ENCODE measurements at regions of chr1 and their contacts with region 1.

Region 1: DNA sequence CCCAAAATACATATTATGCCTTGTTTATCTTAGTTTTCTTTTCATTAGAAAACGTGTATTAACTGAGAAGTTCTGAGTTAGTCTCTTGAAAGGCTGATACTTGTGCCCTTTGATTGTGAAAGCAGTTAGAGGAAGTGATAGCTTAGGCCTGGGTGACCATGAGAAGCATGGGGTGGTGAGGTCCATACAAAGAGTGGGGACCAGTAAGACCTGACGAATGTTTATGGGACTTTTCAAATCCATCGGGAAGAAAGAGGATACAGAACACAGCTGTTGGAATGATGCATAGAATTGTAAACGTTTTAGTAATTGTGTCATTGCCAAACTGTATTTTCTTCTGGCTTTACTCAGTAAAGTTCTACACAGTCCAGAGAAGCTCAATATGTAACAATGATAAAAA is 259.8 kb downstream of the LMO4 start:
- DNase-seq: no peak
- H3K4me3 ChIP-seq: no peak overlapping the region
- H3K27ac ChIP-seq: no peak overlapping the region
- H3K4me1 ChIP-seq: peaks cover 41% of the 10 kb centered on the region
- H3K27me3 ChIP-seq: no peaks in the 10 kb centered on the region
- CTCF ChIP-seq: no peak

Region 2: DNA sequence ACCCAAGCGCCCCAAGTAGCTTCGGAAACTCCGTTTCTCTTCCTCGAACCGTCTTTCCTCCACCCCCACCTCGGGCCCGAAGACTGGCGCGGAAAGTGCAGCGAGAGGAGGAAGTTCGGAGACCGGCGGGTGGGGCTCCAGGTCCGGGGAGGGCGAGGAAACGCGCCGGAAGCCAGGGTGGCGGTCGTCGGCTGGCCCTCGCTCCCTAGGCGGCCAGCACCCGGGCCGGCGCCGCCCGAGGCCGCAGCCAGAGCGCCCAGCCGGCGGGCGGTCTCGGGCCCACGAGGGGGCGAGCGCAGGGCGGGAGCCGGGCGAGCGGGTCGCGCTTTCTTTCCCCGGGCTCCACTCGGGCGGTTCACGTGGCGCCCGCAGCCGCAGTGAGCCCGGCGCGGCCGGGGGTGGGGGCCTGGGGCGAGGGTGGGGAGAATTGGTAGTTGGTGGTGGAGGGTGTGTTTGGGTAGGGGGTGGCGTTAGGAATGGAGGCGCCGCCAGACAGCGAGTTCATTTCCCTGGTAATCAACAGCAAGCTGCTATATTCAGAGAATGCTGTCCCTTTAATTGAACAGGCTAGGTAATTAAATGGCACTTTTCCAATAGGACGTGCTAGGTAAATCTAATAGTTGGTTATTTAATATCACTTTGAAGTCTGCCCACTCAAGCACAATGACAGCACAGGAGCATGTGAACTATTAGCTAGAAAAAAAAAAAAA is 253.2 kb before region 1 on chr1:
- CTCF ChIA-PET with region 1: no interaction called
- POLR2A ChIA-PET with region 1: no interaction called
- intact Hi-C with region 1: loop called (anchors 10 kb)
- DNase-seq: peak; percentile 61
- H3K4me3 ChIP-seq: peak overlapping the region; percentile 63
- H3K27ac ChIP-seq: peak overlapping the region; percentile 84
- H3K4me1 ChIP-seq: peaks cover 42% of the 10 kb centered on the region
- H3K27me3 ChIP-seq: no peaks in the 10 kb centered on the region
- CTCF ChIP-seq: no peak; the same call in 1 of the 2 replicates

Region 3: DNA sequence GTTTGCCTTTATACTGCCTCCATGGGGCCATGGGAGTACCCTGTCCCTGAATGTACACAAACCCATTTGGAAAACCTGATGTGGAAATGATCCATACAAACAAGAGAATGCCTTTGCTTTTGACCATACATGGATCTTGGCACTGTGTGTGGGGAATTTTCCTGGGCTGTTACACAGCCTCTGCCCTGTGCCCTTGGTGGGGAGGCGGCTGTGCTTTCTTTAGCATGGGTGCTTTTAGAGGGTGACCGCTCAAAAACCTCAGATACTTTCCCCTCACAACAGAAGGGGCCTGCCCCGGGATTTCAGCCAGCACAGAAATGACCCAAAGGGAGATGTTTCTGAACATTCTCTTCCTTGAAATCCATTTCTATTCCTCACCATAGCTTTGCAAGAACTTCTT is 65.0 kb before region 1 on chr1:
- CTCF ChIA-PET with region 1: no interaction called
- POLR2A ChIA-PET with region 1: no interaction called
- intact Hi-C with region 1: no loop called
- DNase-seq: no peak
- H3K4me3 ChIP-seq: no peak overlapping the region
- H3K27ac ChIP-seq: no peak overlapping the region
- H3K4me1 ChIP-seq: peaks cover 4% of the 10 kb centered on the region
- H3K27me3 ChIP-seq: no peaks in the 10 kb centered on the region
- CTCF ChIP-seq: no peak

Region 4: GRCh38 chr1:87684194-87684593 is 95.7 kb after region 1 on chr1:
- CTCF ChIA-PET with region 1: no interaction called
- POLR2A ChIA-PET with region 1: no interaction called
- intact Hi-C with region 1: loop called (anchors 5 kb)
- DNase-seq: peak; percentile 51
- H3K4me3 ChIP-seq: peak overlapping the region; percentile 31
- H3K27ac ChIP-seq: peak overlapping the region; percentile 80
- H3K4me1 ChIP-seq: peaks cover 38% of the 10 kb centered on the region
- H3K27me3 ChIP-seq: no peaks in the 10 kb centered on the region
- CTCF ChIP-seq: no peak

Region 5: DNA sequence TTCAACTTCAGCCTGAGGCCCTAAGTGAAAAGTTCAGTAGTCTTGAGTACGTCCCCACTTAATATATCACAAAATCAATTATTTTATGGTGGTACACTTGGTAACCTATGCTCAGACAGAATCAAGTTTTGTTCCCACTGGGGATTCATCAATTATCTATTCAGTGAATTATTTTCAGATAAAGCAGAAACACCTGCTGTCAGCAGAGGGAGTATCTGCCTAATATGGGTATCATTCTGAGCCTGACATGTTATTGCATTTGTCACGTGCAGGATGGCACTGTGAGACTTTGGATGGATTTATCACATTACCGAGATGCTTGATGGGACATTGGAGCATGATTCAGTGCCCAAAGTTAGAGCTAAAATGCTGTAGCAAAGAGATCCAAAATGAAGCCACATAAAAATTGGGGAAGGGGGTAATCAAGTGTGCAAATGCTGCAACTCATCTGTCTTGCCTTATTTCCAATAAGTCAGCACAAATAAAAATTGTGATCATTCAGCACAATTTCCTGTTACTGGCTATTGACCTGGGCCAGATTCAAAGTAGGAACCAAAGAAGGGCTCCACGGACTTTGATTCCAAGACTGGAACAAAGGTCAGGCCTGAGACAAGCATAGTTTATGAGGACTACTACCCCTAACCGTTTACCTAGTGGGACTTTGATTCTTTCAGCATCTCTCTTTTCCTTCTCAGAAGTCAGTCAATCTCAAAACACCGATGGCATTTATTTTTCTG is 397.8 kb after region 1 on chr1:
- CTCF ChIA-PET with region 1: no interaction called
- POLR2A ChIA-PET with region 1: interaction called, 4 read pairs
- intact Hi-C with region 1: loop called (anchors 5 kb)
- DNase-seq: peak; percentile 46
- H3K4me3 ChIP-seq: no peak overlapping the region
- H3K27ac ChIP-seq: no peak overlapping the region
- H3K4me1 ChIP-seq: peaks cover 22% of the 10 kb centered on the region
- H3K27me3 ChIP-seq: no peaks in the 10 kb centered on the region
- CTCF ChIP-seq: peak; percentile 40; the same call in 1 of the 2 replicates